K562 (cell line): ENCODE measurements at regions of chr11 and their contacts with region 1.

Region 1: DNA sequence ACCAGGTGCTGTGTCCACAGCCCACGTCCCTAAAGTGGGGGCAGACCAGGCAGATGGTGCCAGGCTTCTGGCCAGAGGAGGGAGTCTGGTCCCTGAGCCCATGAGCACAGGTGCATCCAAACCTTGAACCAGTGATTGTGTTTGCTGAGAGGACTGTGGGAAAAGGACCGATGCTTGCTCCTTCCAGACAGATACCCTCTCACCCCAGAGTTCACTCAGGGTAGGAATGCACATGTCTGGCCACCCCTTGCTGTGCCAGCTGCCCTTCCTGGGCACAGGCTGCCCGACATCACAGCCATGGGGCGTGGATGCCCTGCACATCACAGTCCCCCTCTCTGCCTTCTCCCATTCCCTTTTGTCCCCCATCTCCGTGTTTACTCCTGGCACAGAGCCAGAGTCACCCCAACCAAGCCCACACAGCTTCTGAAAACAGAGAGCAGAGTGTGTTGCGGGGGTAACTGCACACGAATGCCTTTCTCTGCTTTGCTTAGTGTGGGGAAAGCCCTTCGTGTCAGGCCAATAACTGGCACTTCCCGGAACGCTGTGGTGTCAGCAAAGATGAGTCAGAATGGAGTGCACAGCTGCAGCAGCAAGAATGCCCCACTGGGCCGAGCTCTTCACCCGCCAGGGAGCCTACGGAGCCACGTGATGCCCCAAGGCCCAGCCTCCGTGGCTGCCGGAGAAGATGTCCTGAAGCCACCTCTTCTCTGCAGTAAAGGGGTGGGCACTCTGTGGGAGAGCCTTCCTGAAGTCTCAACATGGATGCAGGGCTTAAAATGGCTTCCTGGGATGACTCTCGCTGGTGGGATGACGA is 7.6 kb downstream of the CARS1 start:
- DNase-seq: no peak
- ATAC-seq: no peak
- H3K4me3 ChIP-seq: no peak overlapping the region
- H3K27ac ChIP-seq: no peak overlapping the region
- H3K4me1 ChIP-seq: peaks cover 19 to 34% of the 10 kb centered on the region in 2 experiments; a peak in 4 of 5 replicates
- H3K27me3 ChIP-seq: no peaks in the 10 kb centered on the region
- CTCF ChIP-seq: peak in 1 of 3 experiments; percentile 18; a peak in 1 of 6 replicates
- EP300 ChIP-seq: no peak
- POLR2A ChIP-seq: no peak
- RAD21 ChIP-seq: no peak

Region 2: DNA sequence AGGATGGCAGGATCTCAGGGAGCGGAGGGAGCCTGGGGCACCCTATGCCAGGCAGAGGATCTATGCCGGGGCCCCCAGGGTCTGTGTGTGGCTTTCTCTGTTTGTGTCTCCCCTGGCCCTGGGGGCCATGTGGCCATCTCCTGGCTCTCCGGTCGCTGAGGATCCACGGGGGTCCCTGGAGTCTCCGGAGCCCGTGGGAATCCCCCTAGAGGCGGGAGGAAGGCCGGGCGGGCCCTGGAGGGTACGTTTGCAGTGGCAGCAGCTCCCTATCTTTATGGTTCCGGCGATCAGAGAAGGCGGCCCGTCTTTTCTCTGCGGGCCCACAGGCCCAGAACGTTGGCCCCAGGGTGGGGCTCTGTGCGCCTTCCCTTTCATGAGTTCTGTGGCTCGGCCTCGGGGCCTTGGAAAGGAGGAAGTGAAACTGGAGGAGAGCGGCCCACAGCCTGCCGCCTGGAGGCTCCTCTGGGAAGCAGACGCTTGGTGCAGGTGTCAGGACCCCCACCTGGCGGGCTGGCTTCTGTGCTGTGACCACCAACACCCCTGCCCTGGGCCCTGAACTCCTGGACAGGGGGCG is 522.7 kb before region 1 on chr11:
- CTCF ChIA-PET with region 1: no interaction called
- POLR2A ChIA-PET with region 1: no interaction called
- in situ Hi-C with region 1: no loop called
- intact Hi-C with region 1: no loop called
- DNase-seq: peak; percentile 27 to 37 (median 36)
- ATAC-seq: peak; percentile 71
- H3K4me3 ChIP-seq: no peak overlapping the region
- H3K27ac ChIP-seq: no peak overlapping the region
- H3K4me1 ChIP-seq: peaks cover 0 to 54% of the 10 kb centered on the region in 2 experiments; a peak in 2 of 5 replicates
- H3K27me3 ChIP-seq: peaks cover 14 to 75% of the 10 kb centered on the region in 2 experiments; a peak in 4 of 5 replicates
- CTCF ChIP-seq: peak; percentile 39 to 56 (median 52); a peak in 5 of 6 replicates
- EP300 ChIP-seq: no peak
- POLR2A ChIP-seq: no peak
- RAD21 ChIP-seq: peak in 1 of 2 experiments; percentile 44; a peak in 1 of 4 replicates

Region 3: GRCh38 chr11:2912498-2912897 is 137.1 kb before region 1 on chr11:
- CTCF ChIA-PET with region 1: no interaction called
- POLR2A ChIA-PET with region 1: no interaction called
- in situ Hi-C with region 1: no loop called
- intact Hi-C with region 1: no loop called
- DNase-seq: peak; percentile 87 to 93 (median 91)
- ATAC-seq: peak; percentile 91
- H3K4me3 ChIP-seq: no peak overlapping the region
- H3K27ac ChIP-seq: peak overlapping the region; percentile 39; the same call in 1 of the 3 replicates
- H3K4me1 ChIP-seq: peaks cover 14 to 79% of the 10 kb centered on the region in 2 experiments; a peak in 4 of 5 replicates
- H3K27me3 ChIP-seq: no peaks in the 10 kb centered on the region
- CTCF ChIP-seq: no peak
- EP300 ChIP-seq: no peak
- POLR2A ChIP-seq: no peak
- RAD21 ChIP-seq: no peak

Region 4: DNA sequence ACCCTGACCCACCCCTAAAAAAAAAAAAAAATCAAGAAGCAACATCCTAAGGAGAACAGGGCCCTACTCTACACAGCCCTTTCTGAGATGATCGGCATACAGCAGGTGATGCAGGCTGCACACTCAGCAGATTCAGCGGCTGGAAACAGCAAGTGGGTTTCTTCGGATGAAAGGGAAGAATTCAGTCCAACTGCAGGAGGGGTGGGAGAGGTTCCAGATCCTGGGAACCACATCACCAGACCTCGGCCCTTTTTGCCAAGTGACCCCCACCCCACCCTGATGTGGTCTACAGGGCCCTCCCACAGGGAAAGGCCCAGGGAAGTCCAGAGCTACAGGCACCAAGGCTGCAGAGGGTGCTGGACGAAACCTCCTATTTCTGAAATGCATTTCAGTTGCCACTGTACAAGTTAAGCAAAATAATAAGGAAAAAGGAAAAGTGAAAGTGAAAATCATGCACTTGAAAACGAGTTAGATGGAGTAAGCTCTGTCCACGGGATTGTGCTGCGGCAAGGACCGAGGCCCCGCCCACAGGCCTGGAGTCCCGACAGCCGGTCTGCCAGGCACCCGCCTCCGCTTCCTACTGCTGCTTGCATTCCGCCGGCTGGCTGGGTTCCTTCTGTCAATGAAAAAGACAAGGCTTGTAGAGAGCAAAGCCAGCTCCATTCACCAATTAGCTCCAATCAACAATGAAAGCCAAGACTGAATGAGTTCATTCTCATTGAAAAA is 104.4 kb before region 1 on chr11:
- CTCF ChIA-PET with region 1: no interaction called
- POLR2A ChIA-PET with region 1: no interaction called
- in situ Hi-C with region 1: no loop called
- intact Hi-C with region 1: no loop called
- DNase-seq: no peak
- ATAC-seq: no peak
- H3K4me3 ChIP-seq: no peak overlapping the region
- H3K27ac ChIP-seq: no peak overlapping the region
- H3K4me1 ChIP-seq: peaks cover 0 to 32% of the 10 kb centered on the region in 2 experiments; a peak in 2 of 5 replicates
- H3K27me3 ChIP-seq: no peaks in the 10 kb centered on the region
- CTCF ChIP-seq: no peak
- EP300 ChIP-seq: no peak
- POLR2A ChIP-seq: no peak
- RAD21 ChIP-seq: no peak

Region 5: DNA sequence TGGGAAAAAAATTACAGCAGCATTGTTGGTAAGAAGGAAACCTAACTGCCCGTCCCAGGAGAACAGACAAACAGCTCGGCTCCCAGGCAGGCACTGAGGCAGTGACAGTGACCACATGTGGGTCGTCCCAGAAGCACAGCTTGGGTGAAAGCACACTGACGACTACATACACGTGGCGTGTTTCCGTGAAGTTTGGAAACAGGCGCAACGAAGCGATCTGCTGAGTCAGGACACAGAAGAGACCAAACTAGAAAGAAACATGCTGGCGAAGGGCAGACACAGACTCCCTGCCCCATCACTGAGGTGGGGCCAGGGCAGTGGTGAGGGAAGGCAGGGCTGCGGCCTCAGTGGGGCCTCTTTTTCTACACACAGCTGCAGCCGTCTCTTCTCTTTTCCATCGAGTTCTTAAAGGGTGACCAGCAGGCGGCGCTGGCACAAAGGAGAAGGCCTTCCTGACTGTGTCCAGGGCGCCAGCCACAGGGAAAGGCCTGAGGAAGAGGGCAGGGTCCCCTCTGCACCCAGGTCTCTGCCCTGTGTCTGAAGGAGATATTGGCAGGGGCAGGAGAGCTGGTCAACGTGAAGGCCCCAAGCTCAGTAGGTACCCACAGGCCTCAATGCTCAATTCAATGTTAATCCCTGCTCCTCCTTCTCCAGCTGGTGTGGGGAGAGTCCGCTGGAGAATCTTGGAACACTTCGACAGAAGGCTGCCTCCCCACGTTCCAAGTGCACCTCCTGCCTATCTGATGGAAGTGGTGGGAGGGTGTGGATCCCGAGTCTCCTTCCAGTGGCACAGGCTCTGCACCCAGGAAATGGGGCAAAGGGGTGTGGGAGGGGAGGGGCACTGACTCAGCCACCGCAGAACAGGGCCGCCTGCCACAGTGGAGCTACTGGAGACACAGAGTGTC is 12.3 kb before region 1 on chr11:
- CTCF ChIA-PET with region 1: no interaction called
- POLR2A ChIA-PET with region 1: interaction called, 12 read pairs
- in situ Hi-C with region 1: no loop called
- intact Hi-C with region 1: no loop called
- DNase-seq: peak; percentile 58 to 81 (median 62)
- ATAC-seq: peak; percentile 95
- H3K4me3 ChIP-seq: no peak overlapping the region
- H3K27ac ChIP-seq: no peak overlapping the region
- H3K4me1 ChIP-seq: no peaks in the 10 kb centered on the region; a peak in 1 of 5 replicates
- H3K27me3 ChIP-seq: no peaks in the 10 kb centered on the region
- CTCF ChIP-seq: peak; percentile 83 to 88 (median 88)
- EP300 ChIP-seq: no peak
- POLR2A ChIP-seq: no peak
- RAD21 ChIP-seq: peak; percentile 74 to 80

Region 6: GRCh38 chr11:3160252-3161031 is 110.8 kb after region 1 on chr11:
- CTCF ChIA-PET with region 1: no interaction called
- POLR2A ChIA-PET with region 1: no interaction called
- in situ Hi-C with region 1: no loop called
- intact Hi-C with region 1: no loop called
- DNase-seq: no peak
- ATAC-seq: no peak
- H3K4me3 ChIP-seq: no peak overlapping the region
- H3K27ac ChIP-seq: no peak overlapping the region
- H3K4me1 ChIP-seq: peaks cover 20 to 78% of the 10 kb centered on the region in 2 experiments
- H3K27me3 ChIP-seq: no peaks in the 10 kb centered on the region
- CTCF ChIP-seq: no peak
- EP300 ChIP-seq: no peak
- POLR2A ChIP-seq: no peak
- RAD21 ChIP-seq: no peak